ENCODE measurements at regions of chr6 and their contacts with region 1.

Region 1: DNA sequence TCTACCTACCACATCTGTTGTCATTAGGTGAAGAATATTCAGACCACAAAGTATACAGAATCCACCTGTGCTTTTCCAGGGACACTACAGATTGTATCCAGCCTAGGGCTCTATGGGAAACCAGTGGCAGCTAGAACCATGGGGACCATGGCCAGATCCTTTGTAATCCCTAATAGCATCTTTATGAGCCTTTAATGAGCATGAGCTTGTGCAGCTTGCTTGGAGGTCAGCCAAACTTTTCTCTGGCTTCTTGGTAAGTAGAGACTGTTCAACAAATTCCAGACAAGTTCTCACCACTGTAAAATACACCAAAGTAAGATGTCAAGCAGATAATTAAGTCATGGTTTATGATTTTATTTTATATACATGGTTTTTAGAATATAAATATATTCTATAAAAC is 301.6 kb upstream of the ADGRB3 start:
- DNase-seq: peak; percentile 1
- H3K4me3 ChIP-seq: no peak overlapping the region
- H3K27ac ChIP-seq: no peak overlapping the region; a peak in 1 of 4 replicates
- H3K4me1 ChIP-seq: no peaks in the 10 kb centered on the region
- H3K27me3 ChIP-seq: no peaks in the 10 kb centered on the region
- CTCF ChIP-seq: no peak
- EP300 ChIP-seq: no peak
- RAD21 ChIP-seq: no peak

Region 2: GRCh38 chr6:68046756-68047155 is 286.7 kb before region 1 on chr6:
- CTCF ChIA-PET with region 1: no interaction called
- POLR2A ChIA-PET with region 1: no interaction called
- DNase-seq: no peak
- H3K4me3 ChIP-seq: no peak overlapping the region
- H3K27ac ChIP-seq: no peak overlapping the region
- H3K4me1 ChIP-seq: no peaks in the 10 kb centered on the region
- H3K27me3 ChIP-seq: no peaks in the 10 kb centered on the region
- CTCF ChIP-seq: no peak
- EP300 ChIP-seq: no peak
- RAD21 ChIP-seq: no peak

Region 3: GRCh38 chr6:68279793-68280557 is 53.5 kb before region 1 on chr6:
- CTCF ChIA-PET with region 1: no interaction called
- POLR2A ChIA-PET with region 1: no interaction called
- DNase-seq: no peak
- H3K4me3 ChIP-seq: no peak overlapping the region
- H3K27ac ChIP-seq: no peak overlapping the region
- H3K4me1 ChIP-seq: no peaks in the 10 kb centered on the region
- H3K27me3 ChIP-seq: no peaks in the 10 kb centered on the region
- CTCF ChIP-seq: no peak
- EP300 ChIP-seq: no peak
- RAD21 ChIP-seq: no peak

Region 4: GRCh38 chr6:68343901-68344300 is 10.5 kb after region 1 on chr6:
- CTCF ChIA-PET with region 1: interaction called, 12 read pairs
- POLR2A ChIA-PET with region 1: no interaction called
- DNase-seq: peak; percentile 5
- H3K4me3 ChIP-seq: no peak overlapping the region; a peak in 1 of 4 replicates
- H3K27ac ChIP-seq: no peak overlapping the region
- H3K4me1 ChIP-seq: no peaks in the 10 kb centered on the region
- H3K27me3 ChIP-seq: no peaks in the 10 kb centered on the region
- CTCF ChIP-seq: peak; percentile 36
- EP300 ChIP-seq: no peak
- RAD21 ChIP-seq: peak; percentile 70

Measured in SK-N-SH (cell line).